ENCODE measurements at regions of chr10 and their contacts with region 1.

Region 1: DNA sequence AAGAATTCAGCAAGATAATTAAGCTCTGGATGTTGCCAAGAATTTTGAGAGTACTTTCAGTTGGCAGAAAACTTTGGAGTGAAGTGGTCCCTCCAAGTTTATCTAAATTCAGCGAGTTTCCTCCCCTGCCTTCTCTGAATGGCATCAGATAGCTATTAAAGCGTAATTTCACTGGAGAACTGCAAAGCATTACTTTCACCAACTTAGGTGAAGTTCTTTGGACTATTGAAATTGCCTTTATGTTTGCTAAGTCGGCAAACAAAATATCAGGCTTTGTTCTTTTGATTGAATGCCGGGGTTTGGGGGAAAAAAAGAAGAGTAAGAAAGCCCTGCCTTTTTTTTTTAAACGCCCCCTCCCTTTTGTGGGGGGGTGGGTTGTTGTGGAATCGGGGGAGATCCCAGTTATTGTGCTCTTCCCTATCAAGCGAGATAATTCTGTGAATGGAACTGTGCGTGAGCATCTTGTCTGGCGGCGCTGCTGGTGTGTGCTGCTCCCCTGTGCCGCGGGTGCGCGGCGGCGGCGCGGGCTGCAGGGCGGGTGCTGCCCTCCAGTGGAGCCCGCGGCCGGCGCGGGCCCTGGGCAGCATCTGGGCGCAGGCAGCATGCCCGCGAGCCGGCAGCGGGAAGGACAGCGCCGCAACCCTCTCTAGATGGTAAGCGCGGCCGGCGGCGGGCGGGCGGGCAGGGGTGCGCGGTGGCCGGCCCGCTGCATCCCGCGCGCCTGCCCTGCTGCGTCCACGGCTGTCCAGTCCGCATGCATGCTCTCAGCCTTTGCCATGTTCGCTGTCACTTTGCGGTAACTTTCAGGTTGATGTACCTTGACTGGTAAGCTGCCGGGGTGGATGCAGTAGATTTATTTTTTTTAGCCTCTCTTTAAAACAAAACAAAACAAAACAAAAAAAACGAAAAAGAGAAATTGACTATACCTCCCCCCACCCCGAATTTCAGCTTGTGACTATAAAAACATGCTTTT is 176.5 kb downstream of the TCF7L2 start:
- DNase-seq: no peak

Region 2: DNA sequence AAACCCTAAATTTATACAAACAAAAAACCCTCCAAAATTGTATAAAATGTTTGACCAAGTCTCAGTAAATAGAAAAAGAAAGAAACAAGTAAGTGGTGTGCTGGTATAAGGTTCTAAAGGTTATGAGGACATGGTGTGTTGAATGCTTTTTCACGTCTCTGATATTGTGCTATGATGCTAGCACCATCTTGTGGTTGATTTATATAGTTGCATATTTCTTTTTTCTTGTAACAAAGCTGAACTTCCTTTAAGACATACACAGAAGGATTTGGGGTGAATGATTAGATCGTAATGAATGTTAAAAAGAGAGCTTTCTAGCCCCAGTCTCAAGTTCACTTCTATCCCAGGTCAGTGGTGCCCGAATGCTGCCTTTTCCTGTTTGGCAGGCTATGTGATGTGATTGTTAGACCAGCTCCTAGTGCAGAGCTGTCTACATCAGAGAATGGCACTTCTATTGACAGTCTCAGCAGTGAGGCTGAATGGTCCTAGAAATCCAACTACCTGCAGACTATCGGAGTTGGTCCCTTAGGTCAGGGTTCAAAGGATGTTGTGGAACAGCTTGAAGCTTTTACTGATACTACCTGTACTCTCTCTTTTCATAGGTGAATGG is 654.5 kb before region 1 on chr10:
- intact Hi-C with region 1: loop called (anchors 10 kb)
- DNase-seq: no peak

Region 3: GRCh38 chr10:112565434-112566053 is 561.0 kb before region 1 on chr10:
- intact Hi-C with region 1: loop called (anchors 10 kb)
- DNase-seq: no peak

Region 4: DNA sequence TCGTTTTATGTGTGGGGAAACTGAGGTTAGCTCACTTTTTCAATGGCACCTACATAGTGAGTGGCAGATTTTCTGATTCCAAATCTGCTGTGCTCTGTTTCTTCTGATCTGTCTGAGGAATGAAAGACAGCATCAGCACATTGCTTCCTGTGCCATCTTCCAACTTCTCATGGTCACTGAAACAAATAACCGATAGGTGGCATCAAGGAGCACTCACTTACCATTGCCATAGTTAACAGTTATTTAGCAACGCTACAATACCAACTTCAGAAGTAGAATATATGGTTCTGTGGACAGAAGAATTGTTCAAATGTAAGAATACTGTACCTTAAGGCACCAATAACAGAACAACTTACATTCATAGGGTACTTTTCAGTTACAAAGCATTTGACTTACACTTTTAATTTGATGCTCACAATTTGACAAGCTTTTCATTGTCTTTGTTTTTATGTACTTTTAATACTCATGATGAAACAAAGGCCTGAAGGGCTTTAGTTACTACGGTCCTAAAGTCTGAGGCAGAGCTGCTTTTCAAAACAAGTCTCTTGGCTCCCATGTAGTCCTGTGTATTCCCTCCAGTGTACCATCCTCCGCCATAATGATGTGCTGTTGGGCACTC is 405.3 kb before region 1 on chr10:
- intact Hi-C with region 1: loop called (anchors 2 kb)
- DNase-seq: no peak

Region 5: DNA sequence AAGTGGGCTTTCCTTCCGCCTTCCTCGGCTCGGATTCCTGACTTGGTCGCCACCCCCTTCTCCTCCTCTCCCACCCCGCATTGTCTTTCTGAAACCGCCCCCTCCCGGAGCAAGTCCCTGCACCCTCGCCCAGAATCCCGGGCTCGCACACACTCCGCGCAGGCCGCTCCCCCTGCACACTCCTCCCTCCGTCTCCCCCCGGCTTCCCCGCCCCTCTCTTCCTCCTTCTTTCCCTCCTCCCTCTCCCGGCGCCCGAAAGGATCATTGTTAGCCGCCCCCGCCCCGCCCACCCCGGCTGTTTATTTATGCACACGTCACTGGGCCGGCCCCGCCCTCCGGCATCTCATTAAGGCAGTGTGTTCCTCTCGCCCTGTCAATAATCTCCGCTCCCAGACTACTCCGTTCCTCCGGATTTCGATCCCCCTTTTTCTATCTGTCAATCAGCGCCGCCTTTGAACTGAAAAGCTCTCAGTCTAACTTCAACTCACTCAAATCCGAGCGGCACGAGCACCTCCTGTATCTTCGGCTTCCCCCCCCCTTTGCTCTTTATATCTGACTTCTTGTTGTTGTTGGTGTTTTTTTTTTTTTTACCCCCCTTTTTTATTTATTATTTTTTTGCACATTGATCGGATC is 176.5 kb before region 1 on chr10 and contains the start of gene TCF7L2:
- intact Hi-C with region 1: loop called (anchors 5 kb)
- DNase-seq: peak; percentile 96
- total RNA-seq, gene TCF7L2: 11.7 TPM

Region 6: DNA sequence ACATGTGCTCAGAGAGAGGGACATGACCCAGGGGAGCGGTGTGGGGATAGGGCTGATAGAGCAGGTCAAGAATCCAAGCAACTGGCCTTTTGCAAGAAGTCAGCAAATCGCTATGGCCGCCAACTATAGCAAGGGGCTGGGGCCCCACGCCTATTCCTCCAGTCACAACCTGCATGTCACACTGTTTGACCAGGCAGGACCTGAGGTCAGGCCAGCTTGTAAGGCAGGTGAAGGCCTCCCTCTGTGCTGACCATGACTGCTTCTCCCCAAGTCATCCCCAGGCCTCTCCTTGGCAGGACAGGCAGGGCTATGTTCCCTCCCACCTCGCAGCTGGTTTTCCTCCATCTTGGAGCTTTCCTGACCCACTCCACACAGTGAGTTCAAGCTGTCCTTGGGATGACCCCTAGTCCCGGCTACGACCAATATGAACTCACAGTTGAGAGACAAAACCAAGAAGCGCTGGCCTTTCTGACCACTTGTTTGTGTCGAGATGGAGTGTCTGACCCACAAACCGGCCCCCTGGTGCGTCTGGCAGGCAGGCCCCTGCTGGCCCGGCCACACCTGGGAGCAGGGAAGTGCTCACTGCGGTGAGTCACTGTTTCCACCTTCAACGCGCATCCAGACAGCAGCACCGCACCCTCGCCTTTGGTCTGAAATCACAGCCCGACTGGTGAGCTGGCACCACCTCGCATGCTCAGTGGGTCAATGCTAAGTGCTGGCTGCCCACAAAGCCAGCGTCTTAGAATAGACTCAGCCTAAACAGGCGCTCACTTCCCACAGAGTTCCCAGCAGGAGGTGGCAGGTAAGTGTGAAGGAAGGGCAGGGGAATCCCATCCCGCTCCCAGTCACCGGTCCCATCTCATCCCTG is 1194.0 kb after region 1 on chr10:
- intact Hi-C with region 1: no loop called
- DNase-seq: no peak